ENCODE measurements at regions of chr15 and their contacts with region 1.

Region 1: DNA sequence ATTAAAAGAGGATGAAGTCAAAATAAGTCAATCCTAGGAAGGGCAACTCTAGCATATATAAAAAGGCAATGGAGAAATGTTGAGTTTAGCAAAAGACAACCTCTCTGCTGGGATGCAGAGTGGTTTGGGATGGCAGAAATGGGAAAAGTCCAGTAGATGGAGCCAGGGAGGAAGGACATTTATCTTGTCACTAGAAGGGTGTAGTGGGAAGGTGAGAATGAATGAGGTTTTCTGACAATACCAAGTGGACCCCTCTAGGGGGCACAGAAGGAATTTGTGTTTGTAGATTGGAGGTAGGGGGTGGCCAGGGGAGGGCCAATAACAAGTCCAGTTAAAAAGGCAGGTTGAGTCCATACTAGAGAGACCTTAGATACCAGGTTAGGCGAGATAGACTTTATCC is 80.0 kb downstream of the THSD4 start:
- DNase-seq: no peak
- ATAC-seq: no peak
- H3K4me3 ChIP-seq: no peak overlapping the region
- H3K27ac ChIP-seq: no peak overlapping the region
- H3K4me1 ChIP-seq: peaks cover 0 to 28% (median 11%) of the 10 kb centered on the region in 9 donors
- H3K27me3 ChIP-seq: no peaks in the 10 kb centered on the region
- CTCF ChIP-seq: peak in 1 of 9 donors; percentile 6

Region 2: DNA sequence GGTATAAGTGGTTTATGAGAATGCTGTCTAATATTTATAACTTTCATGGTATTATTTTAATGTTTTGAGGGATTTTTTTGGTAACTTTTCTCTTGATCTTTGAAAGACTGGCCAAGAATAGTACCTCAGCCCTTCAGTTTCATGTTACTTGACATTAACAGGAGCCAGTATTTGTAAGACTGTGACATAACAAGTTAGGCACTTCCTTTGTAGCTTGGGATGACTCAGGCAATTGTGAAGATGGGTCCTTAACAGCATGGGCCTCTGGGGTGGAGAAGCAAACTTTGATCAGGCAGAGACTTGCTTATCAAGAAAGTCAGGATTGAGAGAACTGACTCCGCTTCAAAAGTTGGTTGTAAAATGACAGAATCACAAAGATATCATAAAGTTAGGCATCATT is 293.1 kb before region 1 on chr15:
- intact Hi-C with region 1: loop called in 1 of 10 experiments (anchors 5 kb)
- DNase-seq: no peak
- ATAC-seq: no peak
- H3K4me3 ChIP-seq: no peak overlapping the region
- H3K27ac ChIP-seq: no peak overlapping the region
- H3K4me1 ChIP-seq: no peaks in the 10 kb centered on the region
- H3K27me3 ChIP-seq: no peaks in the 10 kb centered on the region
- CTCF ChIP-seq: no peak

Region 3: GRCh38 chr15:71136159-71136783 is 59.0 kb before region 1 on chr15:
- intact Hi-C with region 1: no loop called
- DNase-seq: no peak
- ATAC-seq: peak; percentile 23 to 80 (median 74)
- H3K4me3 ChIP-seq: no peak overlapping the region
- H3K27ac ChIP-seq: peak overlapping the region in 9 of 10 donors; percentile 14 to 81 (median 52)
- H3K4me1 ChIP-seq: peaks cover 7 to 83% (median 32%) of the 10 kb centered on the region in 9 donors
- H3K27me3 ChIP-seq: no peaks in the 10 kb centered on the region
- CTCF ChIP-seq: no peak

Region 4: DNA sequence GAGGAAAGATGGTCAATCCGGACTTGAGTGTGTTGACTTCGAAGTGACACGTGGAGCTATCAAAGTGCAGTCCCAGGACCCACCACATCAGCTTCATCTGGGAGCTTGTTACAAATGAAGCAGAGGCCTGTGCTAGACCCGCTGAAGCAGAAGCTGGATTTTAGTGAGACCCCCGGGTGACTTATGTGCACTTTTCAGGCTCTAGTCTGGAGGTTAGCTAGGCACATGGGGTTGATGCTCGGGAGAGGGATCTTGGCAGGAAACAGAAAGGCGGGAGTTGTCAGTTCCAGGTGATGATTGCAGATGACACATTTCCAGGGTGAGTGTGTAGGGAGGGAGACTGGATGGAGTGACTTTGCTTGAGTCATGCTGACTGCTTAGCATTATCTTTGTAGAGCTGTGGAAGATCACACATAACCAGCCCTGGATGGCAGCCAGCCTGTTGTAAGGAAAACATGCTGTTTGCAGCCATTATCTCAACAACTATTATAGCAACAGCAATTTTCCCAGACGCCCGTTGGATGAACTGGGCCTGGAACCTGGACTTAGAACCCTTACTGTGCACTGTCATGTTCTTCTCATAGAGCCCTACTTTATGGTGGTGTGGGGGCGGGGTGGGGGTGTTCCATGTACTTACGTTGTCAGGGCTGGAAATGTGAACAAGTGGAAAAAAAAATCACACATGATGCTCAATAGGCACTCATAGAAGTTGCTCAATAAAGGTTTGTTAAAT is 42.4 kb after region 1 on chr15:
- intact Hi-C with region 1: no loop called
- DNase-seq: peak; percentile 66 to 78
- ATAC-seq: peak; percentile 76 to 97 (median 92)
- H3K4me3 ChIP-seq: no peak overlapping the region
- H3K27ac ChIP-seq: peak overlapping the region in 9 of 10 donors; percentile 0 to 68 (median 54)
- H3K4me1 ChIP-seq: peaks cover 0 to 49% (median 19%) of the 10 kb centered on the region in 9 donors
- H3K27me3 ChIP-seq: no peaks in the 10 kb centered on the region
- CTCF ChIP-seq: no peak

Measured in heart right ventricle (tissue), 16 donors.